Left ventricle myocardium inferior (tissue), 1 donor: ENCODE measurements at regions of chr12 and their contacts with region 1.

Region 1: DNA sequence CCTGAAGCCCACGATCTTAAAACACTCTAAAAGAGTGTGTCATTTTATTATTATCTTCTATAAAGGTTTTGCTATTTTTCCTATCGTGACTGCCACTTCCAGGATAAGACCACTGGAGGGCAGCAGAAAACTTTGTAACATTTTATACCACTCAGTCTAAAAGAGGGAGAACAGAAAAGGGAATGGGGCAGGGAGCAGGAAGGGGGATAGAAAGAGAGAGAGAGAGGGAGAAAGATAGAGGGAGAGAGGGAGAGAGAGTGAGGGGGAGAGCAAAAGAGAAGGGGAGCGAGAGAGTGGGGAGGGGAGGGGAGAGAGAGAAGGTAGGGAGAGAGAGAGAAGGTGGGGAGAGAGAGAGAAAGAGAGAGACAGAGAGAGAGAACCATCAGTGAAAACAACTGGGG is 2.0 kb upstream of the ART4 start:
- DNase-seq: no peak
- H3K4me3 ChIP-seq: no peak overlapping the region
- H3K27ac ChIP-seq: peak overlapping the region; percentile 85
- H3K4me1 ChIP-seq: peaks cover 79% of the 10 kb centered on the region
- H3K27me3 ChIP-seq: no peaks in the 10 kb centered on the region
- CTCF ChIP-seq: peak; percentile 85

Region 2: DNA sequence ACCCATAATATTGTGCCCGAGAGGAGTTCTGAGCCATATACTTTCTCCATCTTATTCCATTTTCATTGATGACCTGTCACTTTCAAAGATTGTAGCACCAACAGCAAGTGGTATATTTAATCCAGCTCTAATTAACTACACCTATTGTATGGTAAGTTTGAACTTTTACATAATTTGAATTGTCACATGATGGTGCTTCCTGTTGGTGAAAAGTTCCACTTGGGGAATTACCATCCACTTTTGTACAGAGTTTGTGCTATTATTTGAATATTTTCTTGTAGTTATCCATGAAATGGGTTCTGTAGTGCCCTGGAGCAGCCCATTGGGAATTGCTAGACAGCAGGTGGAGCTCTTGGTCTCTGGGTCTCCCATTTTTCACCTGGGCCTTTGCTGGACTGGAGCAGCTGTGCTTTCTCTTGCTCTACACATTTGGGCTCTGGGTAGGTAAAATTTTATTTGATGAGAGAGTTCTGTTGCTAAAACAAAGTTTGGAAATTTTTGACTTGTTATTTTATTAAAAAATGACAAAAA is 34.3 kb before region 1 on chr12:
- intact Hi-C with region 1: no loop called
- DNase-seq: no peak
- H3K4me3 ChIP-seq: no peak overlapping the region
- H3K27ac ChIP-seq: no peak overlapping the region
- H3K4me1 ChIP-seq: no peaks in the 10 kb centered on the region
- H3K27me3 ChIP-seq: no peaks in the 10 kb centered on the region
- CTCF ChIP-seq: peak; percentile 56

Region 3: GRCh38 chr12:14884458-14884878 is 39.1 kb after region 1 on chr12:
- intact Hi-C with region 1: loop called (anchors 5 kb)
- DNase-seq: peak; percentile 83
- H3K4me3 ChIP-seq: peak overlapping the region; percentile 62
- H3K27ac ChIP-seq: peak overlapping the region; percentile 83
- H3K4me1 ChIP-seq: peaks cover 39% of the 10 kb centered on the region
- H3K27me3 ChIP-seq: no peaks in the 10 kb centered on the region
- CTCF ChIP-seq: no peak

Region 4: DNA sequence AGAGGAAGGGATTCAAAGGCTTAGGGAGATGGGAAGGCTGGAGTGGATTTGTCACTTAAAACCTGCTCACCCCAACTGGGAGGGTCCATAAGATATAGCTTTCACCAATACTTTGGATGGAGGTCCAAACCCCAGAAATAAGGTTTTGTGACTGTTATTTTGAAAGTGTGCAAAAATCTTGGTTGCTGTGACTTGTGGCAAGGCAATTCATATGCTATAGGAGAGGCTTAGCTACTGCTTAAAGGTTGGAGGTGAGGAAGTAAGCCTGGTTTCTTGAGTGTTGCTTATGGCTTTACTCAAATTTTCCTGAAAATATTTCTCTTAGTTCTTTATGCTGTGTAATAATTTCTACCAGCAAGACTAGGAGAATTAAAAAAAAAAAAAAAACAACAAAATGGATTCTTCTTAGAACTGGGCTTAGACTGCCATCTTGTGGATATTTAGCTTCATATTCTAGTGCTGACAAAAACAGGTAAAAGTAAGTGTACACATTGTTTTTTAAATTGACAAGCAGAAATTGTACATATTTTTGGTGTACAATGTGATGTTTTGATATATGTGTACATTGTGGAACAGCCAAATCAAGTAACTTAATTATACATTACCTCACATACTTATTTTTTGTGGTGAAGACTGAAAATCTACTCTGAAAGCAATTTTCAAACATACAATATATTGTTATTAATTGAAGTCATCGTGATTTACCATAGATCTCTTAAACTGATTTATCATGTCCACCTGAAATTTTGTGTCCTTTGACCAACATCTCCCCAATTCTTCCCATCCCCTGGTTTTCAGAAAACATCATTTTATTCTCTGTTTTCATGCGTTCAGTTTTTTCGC is 150.5 kb after region 1 on chr12:
- intact Hi-C with region 1: loop called (anchors 2 kb)
- DNase-seq: no peak
- H3K4me3 ChIP-seq: no peak overlapping the region
- H3K27ac ChIP-seq: no peak overlapping the region
- H3K4me1 ChIP-seq: peaks cover 9% of the 10 kb centered on the region
- H3K27me3 ChIP-seq: no peaks in the 10 kb centered on the region
- CTCF ChIP-seq: peak; percentile 75

Region 5: DNA sequence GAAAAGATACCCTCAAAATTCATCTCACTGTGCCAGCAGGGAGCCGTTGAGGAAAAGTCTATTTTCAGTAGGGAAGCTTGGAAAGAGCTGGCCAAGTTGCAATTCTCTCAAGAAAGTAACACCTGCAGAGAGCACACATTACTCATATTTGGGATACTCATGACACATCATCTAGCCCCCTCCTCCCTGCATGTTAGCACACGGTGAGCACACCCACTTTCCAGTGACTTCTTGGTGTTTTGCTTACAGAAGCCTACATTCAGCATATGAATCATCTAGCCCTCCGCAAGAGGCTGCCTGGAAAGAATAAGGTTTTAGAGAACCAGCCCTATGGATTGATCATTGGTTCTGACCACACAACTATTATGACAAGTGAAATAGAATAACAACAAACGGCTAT is 601.5 kb after region 1 on chr12:
- intact Hi-C with region 1: no loop called
- DNase-seq: no peak
- H3K4me3 ChIP-seq: no peak overlapping the region
- H3K27ac ChIP-seq: no peak overlapping the region
- H3K4me1 ChIP-seq: no peaks in the 10 kb centered on the region
- H3K27me3 ChIP-seq: no peaks in the 10 kb centered on the region
- CTCF ChIP-seq: no peak